ENCODE measurements at regions of chr9 and their contacts with region 1.

Region 1: DNA sequence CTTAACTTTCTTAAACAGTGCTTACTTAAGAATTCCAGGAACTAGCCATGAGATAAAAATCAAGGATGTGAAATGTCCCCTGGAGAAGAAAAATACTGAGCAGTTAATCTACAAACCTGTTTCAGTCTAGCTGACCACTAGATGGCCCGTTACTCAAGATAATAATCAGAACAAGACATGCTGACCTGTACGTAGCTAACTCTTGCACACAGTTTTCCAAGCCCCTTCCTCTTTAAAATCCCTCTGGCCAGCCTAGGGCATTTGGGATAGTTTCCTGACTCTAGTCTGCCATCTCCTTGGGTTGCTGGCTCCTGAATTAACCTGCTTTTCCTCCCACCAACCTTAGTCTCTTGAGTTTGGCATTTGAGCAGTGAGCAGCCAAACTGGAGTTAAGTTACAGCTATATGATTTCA is 59.2 kb upstream of the TRAF1 start:
- DNase-seq: no peak
- H3K4me3 Mint-ChIP-seq: no peak overlapping the region
- H3K27ac Mint-ChIP-seq: no peak overlapping the region
- H3K4me1 Mint-ChIP-seq: no peaks in the 10 kb centered on the region
- H3K27me3 Mint-ChIP-seq: no peaks in the 10 kb centered on the region

Region 2: DNA sequence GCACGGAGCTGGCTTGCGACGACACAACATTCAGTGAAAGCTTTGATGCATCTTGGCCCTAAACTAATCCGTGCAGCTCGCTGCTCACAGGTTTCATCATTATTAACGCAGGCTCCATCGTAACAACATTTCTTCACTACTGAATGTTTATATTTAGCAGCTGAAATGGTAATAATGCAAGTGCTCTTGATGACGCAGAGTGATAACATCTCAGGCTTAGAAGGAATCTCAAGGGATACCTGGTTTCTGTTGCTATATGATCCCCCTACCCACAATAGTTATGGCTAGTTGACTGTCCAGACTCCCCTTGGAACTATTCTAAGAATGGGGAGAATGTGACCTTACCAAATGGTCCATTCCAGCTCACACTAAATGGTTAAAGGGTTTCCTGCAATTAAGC is 28.1 kb after region 1 on chr9:
- CTCF ChIA-PET with region 1: no interaction called
- POLR2A ChIA-PET with region 1: no interaction called
- intact Hi-C with region 1: no loop called
- DNase-seq: no peak
- H3K4me3 Mint-ChIP-seq: no peak overlapping the region
- H3K27ac Mint-ChIP-seq: no peak overlapping the region
- H3K4me1 Mint-ChIP-seq: peaks cover 8% of the 10 kb centered on the region
- H3K27me3 Mint-ChIP-seq: no peaks in the 10 kb centered on the region

Region 3: GRCh38 chr9:121059998-121060636 is 74.3 kb after region 1 on chr9:
- CTCF ChIA-PET with region 1: interaction called, 112 read pairs
- POLR2A ChIA-PET with region 1: no interaction called
- intact Hi-C with region 1: loop called (anchors 1 kb)
- DNase-seq: no peak
- H3K4me3 Mint-ChIP-seq: no peak overlapping the region
- H3K27ac Mint-ChIP-seq: no peak overlapping the region
- H3K4me1 Mint-ChIP-seq: peaks cover 23% of the 10 kb centered on the region
- H3K27me3 Mint-ChIP-seq: no peaks in the 10 kb centered on the region

Region 4: DNA sequence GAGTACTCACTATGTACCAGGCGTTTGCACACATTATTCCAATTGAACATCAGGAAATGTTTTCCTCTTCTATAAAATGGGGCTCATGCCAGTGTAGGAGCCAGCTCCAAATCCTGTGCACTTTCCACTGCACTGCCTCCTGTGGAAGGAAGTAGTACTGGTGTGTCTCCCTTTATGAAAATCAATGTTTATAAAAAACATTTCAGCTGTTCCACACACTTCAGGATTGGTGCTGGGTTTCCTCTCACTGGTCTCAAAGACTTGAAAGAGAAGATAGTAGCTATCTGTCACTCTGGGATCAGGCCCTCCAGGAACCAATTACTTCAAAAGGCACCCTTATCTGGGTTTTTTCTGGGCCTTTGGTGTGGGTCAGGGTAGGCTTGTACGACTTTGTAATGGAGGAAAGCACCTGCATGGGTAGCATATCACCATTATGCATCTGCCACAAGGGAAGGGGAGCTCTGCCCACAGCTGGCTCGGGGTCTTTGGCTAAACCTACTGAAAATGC is 183.3 kb after region 1 on chr9:
- CTCF ChIA-PET with region 1: interaction called, 4 read pairs
- POLR2A ChIA-PET with region 1: no interaction called
- intact Hi-C with region 1: loop called (anchors 10 kb)
- DNase-seq: peak; percentile 29
- H3K4me3 Mint-ChIP-seq: no peak overlapping the region
- H3K27ac Mint-ChIP-seq: peak overlapping the region; percentile 61
- H3K4me1 Mint-ChIP-seq: peaks cover 18% of the 10 kb centered on the region
- H3K27me3 Mint-ChIP-seq: no peaks in the 10 kb centered on the region

Region 5: DNA sequence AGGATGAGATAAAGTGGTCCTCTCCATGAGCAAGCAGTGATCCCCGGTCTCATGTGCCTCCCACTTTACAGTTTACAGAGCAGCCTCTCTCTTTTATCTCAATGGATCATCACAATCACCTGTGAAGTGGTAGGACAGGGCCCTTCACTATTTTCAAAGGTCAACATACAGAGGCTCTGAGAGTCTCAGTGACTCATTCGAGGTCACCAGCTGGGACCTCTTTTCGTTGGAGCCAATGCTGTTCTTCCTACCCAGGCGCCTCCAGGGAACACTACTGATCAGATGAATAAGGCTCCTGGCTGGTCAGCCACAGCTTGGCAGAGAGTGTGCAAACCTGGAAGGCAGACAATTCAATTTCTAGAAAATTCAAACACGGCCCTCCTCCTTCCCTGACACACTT is 497.2 kb after region 1 on chr9:
- CTCF ChIA-PET with region 1: no interaction called
- POLR2A ChIA-PET with region 1: no interaction called
- intact Hi-C with region 1: no loop called
- DNase-seq: no peak
- H3K4me3 Mint-ChIP-seq: no peak overlapping the region
- H3K27ac Mint-ChIP-seq: no peak overlapping the region
- H3K4me1 Mint-ChIP-seq: no peaks in the 10 kb centered on the region
- H3K27me3 Mint-ChIP-seq: peaks cover 2% of the 10 kb centered on the region

Region 6: DNA sequence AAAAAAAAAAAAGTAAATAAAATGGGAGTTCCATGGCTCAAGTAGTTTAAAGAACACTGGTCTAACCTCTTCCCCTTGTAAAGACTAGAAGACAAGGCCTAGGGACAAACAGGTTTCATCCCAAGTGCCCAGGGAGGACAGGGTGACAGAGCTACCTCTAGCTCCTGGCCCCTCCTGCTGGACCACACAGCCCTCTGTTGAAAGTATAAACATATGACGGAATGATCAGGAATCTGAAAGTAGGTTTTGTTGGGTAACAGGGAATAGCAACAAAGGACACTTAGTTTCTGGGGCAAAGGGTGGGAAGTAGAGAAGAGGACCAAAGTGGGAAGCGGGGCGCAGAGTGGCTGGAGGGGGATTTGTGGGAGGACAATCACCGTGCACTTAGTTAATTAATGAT is 598.6 kb after region 1 on chr9:
- CTCF ChIA-PET with region 1: no interaction called
- POLR2A ChIA-PET with region 1: no interaction called
- intact Hi-C with region 1: no loop called
- DNase-seq: no peak
- H3K4me3 Mint-ChIP-seq: no peak overlapping the region
- H3K27ac Mint-ChIP-seq: no peak overlapping the region
- H3K4me1 Mint-ChIP-seq: no peaks in the 10 kb centered on the region
- H3K27me3 Mint-ChIP-seq: peaks cover 20% of the 10 kb centered on the region